ENCODE measurements at regions of chr6 and their contacts with region 1.

Region 1: DNA sequence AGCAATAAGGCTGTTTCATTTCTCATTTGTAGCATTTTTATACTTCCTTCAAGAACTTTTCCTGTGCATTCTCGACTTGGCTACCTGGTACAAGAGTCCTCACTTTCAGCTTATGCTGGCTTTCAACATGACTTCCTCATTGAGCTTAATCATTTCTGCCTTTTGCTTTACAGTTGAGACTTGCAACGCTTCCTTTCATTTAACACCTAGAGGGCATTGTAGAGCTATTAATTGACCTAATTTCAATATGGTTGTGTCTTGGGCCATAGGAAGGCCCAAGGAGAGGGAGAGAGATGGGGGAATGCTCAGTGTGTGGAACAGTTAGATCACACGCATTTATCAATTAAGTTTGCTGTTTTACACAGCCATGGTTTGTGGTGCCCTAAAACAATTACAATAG is 37.2 kb downstream of the SLC22A2 start:
- DNase-seq: no peak
- H3K4me3 ChIP-seq: no peak overlapping the region
- H3K27ac ChIP-seq: no peak overlapping the region
- H3K4me1 ChIP-seq: peaks cover 0 to 11% of the 10 kb centered on the region in 2 donors
- H3K27me3 ChIP-seq: no peaks in the 10 kb centered on the region
- CTCF ChIP-seq: peak in 1 of 3 experiments; percentile 9

Region 2: GRCh38 chr6:160198606-160199211 is 22.7 kb before region 1 on chr6:
- intact Hi-C with region 1: no loop called
- DNase-seq: no peak
- H3K4me3 ChIP-seq: no peak overlapping the region
- H3K27ac ChIP-seq: no peak overlapping the region
- H3K4me1 ChIP-seq: peaks cover 0 to 11% of the 10 kb centered on the region in 2 donors
- H3K27me3 ChIP-seq: no peaks in the 10 kb centered on the region
- CTCF ChIP-seq: no peak

Region 3: DNA sequence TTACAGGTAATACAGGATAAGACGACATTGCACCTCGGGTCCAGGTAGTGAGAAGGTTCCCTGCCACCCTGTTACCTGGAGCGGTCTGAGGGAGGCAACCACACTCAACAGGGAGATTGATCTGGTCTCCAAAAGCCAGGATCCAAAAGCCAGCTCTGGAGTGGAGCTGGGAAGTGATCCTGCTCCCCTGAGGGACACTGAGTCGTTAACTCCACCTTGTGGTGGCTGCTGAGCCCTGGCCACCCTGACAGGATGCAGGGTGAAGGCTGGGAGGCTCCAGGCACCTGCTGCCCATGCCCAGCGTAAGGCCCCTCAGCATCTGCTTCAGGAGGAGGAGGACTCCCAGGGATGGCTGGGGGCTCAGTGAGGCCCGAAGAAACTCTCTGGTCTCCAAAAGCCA is 75.9 kb after region 1 on chr6:
- intact Hi-C with region 1: loop called (anchors 5 kb)
- DNase-seq: no peak
- H3K4me3 ChIP-seq: no peak overlapping the region
- H3K27ac ChIP-seq: no peak overlapping the region
- H3K4me1 ChIP-seq: peaks cover 7 to 36% of the 10 kb centered on the region in 2 donors
- H3K27me3 ChIP-seq: no peaks in the 10 kb centered on the region
- CTCF ChIP-seq: no peak